ENCODE measurements at regions of chr16 and their contacts with region 1.

Region 1: GRCh38 chr16:31142109-31143010 is 6.8 kb upstream of the PRSS8 start:
- DNase-seq: peak; percentile 98
- H3K4me3 Mint-ChIP-seq: peak overlapping the region; percentile 78
- H3K27ac Mint-ChIP-seq: peak overlapping the region; percentile 88
- H3K4me1 Mint-ChIP-seq: peaks cover 12% of the 10 kb centered on the region
- H3K27me3 Mint-ChIP-seq: peaks cover 13% of the 10 kb centered on the region

Region 2: GRCh38 chr16:30984669-30985400 is 157.5 kb before region 1 on chr16 and contains the start of gene HSD3B7:
- intact Hi-C with region 1: loop called (anchors 1 kb)
- DNase-seq: peak; percentile 73
- H3K4me3 Mint-ChIP-seq: peak within 1 kb of the TSS; percentile 7
- H3K27ac Mint-ChIP-seq: no peak within 1 kb of the TSS
- H3K4me1 Mint-ChIP-seq: no peaks in the 10 kb centered on the region
- H3K27me3 Mint-ChIP-seq: no peaks in the 10 kb centered on the region
- total RNA-seq, gene HSD3B7: 2.1 and 3.3 TPM in 2 replicates

Region 3: GRCh38 chr16:31032736-31033708 is 109.3 kb before region 1 on chr16 and contains the start of gene STX4:
- intact Hi-C with region 1: loop called (anchors 1 kb)
- DNase-seq: peak; percentile 97
- H3K4me3 Mint-ChIP-seq: peak within 1 kb of the TSS; percentile 95
- H3K27ac Mint-ChIP-seq: peak within 1 kb of the TSS; percentile 92
- H3K4me1 Mint-ChIP-seq: peaks cover 24% of the 10 kb centered on the region
- H3K27me3 Mint-ChIP-seq: no peaks in the 10 kb centered on the region
- total RNA-seq, gene STX4: 56.4 and 58.7 TPM in 2 replicates

Region 4: GRCh38 chr16:31084616-31085260 is 57.6 kb before region 1 on chr16:
- intact Hi-C with region 1: no loop called
- DNase-seq: no peak
- H3K4me3 Mint-ChIP-seq: no peak overlapping the region
- H3K27ac Mint-ChIP-seq: no peak overlapping the region
- H3K4me1 Mint-ChIP-seq: no peaks in the 10 kb centered on the region
- H3K27me3 Mint-ChIP-seq: no peaks in the 10 kb centered on the region

Region 5: DNA sequence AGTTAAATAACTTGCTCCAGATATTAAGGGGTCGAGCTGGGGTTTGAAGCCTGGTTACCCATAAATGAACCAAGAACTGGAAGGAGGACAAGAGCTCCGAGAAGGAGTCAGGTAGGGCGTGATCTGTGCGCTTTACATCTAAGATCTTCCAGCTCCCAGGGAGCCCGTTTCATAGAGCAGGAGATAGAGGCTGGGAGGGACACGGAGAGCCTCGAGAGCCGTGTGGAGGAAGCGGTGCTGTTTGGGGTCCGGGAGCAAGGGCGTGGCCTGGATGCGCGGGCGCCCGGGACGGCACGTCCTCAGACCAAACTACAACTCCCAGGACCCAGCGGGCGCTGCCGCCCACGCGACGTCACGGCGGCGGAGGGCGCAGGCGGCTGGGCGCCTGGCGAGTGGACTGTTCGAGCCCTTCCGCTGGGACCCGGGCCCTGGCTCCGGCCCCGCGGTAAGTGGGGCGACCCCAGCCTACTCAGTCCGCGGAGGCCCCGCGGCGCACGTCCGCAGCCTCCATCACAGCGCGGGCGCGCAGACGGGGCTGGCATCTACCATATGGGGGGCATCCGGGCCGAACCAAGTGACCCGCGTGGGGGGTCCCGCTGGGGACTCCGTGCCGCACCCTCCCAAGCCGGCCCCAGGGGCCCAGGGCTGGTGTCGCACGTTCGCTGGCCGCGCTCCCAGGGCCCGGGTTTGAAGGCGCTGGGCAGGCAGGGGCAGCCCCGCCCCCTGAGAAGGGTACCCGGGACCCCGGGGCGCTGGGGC is 34.1 kb before region 1 on chr16 and contains the start of gene BCKDK:
- intact Hi-C with region 1: loop called (anchors 2 kb)
- DNase-seq: peak; percentile 69
- H3K4me3 Mint-ChIP-seq: peak within 1 kb of the TSS; percentile 84
- H3K27ac Mint-ChIP-seq: peak within 1 kb of the TSS; percentile 86
- H3K4me1 Mint-ChIP-seq: peaks cover 22% of the 10 kb centered on the region
- H3K27me3 Mint-ChIP-seq: no peaks in the 10 kb centered on the region
- total RNA-seq, gene BCKDK: 43.6 and 44.8 TPM in 2 replicates

Region 6: DNA sequence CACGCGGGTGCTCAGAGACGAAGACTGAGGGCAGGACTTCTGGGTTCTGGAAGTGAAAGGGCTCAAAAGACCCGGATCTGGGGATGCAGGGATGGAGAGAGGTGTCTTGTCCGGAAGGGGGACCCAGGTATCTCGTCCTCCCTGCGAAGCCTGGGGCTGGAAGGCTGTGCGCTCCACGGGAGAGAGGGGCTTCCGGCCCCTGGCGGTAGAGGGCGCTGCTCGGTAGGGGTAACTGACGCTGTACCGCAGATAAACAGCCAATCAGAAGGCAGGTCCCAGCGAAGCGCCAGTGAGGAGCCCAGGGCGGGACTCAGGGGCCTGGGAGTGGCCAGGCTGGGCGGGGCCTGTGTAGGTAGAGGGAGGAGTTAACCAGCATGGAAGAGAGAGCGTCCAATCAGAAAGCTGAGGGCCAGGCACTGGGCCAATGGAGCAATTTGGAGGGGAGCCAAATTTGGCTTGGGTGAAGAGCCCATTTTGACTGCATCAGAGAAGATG is 330.4 kb after region 1 on chr16:
- intact Hi-C with region 1: loop called (anchors 1 kb)
- DNase-seq: no peak
- H3K4me3 Mint-ChIP-seq: peak overlapping the region; percentile 70
- H3K27ac Mint-ChIP-seq: no peak overlapping the region
- H3K4me1 Mint-ChIP-seq: peaks cover 20% of the 10 kb centered on the region
- H3K27me3 Mint-ChIP-seq: peaks cover 46% of the 10 kb centered on the region